Spleen (tissue), 13 donors: ENCODE measurements at regions of chr20 and their contacts with region 1.

Region 1: DNA sequence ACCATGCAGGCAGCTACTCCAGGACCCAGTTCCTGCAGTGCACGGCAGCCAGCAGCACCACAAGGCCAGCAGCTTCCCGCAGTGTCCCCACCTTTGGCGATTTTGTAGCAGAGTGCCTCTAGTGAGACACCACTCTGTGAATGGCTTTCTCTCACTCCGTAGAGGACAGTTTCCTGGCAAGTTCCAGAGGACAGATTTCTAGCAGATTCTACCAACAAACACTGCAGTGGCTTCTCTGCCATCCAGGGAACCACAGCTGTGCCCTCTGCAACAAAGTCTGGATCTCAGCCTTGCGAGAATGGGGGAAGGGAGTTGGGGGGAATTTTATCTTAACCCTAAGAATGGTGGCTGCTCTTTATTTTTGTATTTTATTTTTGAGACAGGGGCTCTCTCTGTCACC is 28.7 kb downstream of the SNHG17 start:
- DNase-seq: no peak
- H3K4me3 ChIP-seq: no peak overlapping the region
- H3K27ac ChIP-seq: no peak overlapping the region
- H3K4me1 ChIP-seq: no peaks in the 10 kb centered on the region
- H3K27me3 ChIP-seq: no peaks in the 10 kb centered on the region
- CTCF ChIP-seq: no peak
- POLR2A ChIP-seq: no peak

Region 2: GRCh38 chr20:38229376-38230252 is 176.9 kb before region 1 on chr20:
- intact Hi-C with region 1: loop called (anchors 10 kb)
- DNase-seq: peak; percentile 34
- H3K4me3 ChIP-seq: no peak overlapping the region
- H3K27ac ChIP-seq: no peak overlapping the region
- H3K4me1 ChIP-seq: peaks cover 0 to 16% (median 8%) of the 10 kb centered on the region in 6 donors
- H3K27me3 ChIP-seq: peaks cover 0 to 27% (median 0%) of the 10 kb centered on the region in 7 donors
- CTCF ChIP-seq: peak in 7 of 11 experiments; percentile 21 to 44 (median 31)
- POLR2A ChIP-seq: no peak

Region 3: GRCh38 chr20:38460040-38460623 is 53.7 kb after region 1 on chr20:
- intact Hi-C with region 1: no loop called
- DNase-seq: no peak
- H3K4me3 ChIP-seq: no peak overlapping the region
- H3K27ac ChIP-seq: no peak overlapping the region
- H3K4me1 ChIP-seq: peaks cover 0 to 5% (median 0%) of the 10 kb centered on the region in 6 donors
- H3K27me3 ChIP-seq: no peaks in the 10 kb centered on the region
- CTCF ChIP-seq: no peak
- POLR2A ChIP-seq: no peak